Pancreas (tissue), 10 donors: ENCODE measurements at regions of chr20 and their contacts with region 1.

Region 1: DNA sequence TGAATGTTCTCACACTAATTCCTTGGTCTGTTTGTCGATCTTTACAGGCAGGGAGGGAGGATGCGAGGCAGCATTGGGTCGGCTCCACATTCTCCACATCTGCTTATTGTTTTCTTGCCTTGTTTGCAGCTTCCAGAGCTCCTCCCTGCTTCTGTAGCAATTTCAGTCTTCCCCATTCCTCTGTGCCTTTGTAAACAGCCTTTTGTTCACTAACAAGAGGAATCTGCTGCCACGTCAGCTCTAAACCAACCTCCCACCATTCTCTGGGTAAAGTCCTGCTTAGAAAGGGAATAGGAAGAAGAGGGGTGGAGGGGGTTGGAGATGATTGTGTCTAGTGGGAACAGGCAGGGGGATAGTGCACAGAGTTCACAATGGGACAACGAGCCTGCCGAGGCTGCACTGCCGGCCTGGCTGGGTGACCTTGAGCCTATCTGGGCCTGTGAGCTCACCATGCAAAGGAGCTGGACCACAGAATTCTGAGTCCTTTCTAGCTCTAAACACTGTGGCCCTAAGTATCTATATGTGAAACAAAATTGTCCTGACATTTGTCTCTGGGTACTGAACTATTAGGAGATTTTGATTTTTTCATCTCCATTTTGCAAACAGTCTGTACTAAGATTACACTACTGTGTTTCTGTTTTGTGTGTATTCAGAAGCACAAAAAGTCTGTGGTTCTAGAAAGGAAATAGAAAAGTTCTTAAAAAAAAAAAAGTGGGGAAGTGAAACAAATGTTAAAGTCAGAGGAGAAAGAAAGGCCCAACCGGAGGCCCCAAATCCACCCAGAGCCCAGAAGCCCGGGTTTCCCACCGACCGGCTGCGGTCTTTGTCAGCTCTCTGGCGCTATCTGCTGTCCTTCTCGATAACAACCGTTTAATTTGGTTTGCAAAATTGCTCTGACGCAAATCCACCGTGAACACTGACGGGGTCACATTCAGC is 1.4 kb upstream of the PRND start:
- DNase-seq: peak; percentile 45 to 69 (median 62)
- ATAC-seq: peak; percentile 87 to 96 (median 93)
- H3K4me3 ChIP-seq: no peak overlapping the region
- H3K27ac ChIP-seq: peak overlapping the region in 2 of 4 donors; percentile 37 to 39
- H3K4me1 ChIP-seq: no peaks in the 10 kb centered on the region
- H3K27me3 ChIP-seq: peaks cover 0 to 5% (median 0%) of the 10 kb centered on the region in 4 donors
- CTCF ChIP-seq: peak; percentile 17 to 53 (median 46)

Region 2: GRCh38 chr20:4607287-4607713 is 113.0 kb before region 1 on chr20:
- intact Hi-C with region 1: loop called (anchors 5 kb)
- DNase-seq: peak in 3 of 6 donors; percentile 30 to 69 (median 39)
- ATAC-seq: peak; percentile 67 to 94 (median 92)
- H3K4me3 ChIP-seq: no peak overlapping the region
- H3K27ac ChIP-seq: no peak overlapping the region
- H3K4me1 ChIP-seq: no peaks in the 10 kb centered on the region
- H3K27me3 ChIP-seq: no peaks in the 10 kb centered on the region
- CTCF ChIP-seq: peak; percentile 75 to 97 (median 87)

Region 3: DNA sequence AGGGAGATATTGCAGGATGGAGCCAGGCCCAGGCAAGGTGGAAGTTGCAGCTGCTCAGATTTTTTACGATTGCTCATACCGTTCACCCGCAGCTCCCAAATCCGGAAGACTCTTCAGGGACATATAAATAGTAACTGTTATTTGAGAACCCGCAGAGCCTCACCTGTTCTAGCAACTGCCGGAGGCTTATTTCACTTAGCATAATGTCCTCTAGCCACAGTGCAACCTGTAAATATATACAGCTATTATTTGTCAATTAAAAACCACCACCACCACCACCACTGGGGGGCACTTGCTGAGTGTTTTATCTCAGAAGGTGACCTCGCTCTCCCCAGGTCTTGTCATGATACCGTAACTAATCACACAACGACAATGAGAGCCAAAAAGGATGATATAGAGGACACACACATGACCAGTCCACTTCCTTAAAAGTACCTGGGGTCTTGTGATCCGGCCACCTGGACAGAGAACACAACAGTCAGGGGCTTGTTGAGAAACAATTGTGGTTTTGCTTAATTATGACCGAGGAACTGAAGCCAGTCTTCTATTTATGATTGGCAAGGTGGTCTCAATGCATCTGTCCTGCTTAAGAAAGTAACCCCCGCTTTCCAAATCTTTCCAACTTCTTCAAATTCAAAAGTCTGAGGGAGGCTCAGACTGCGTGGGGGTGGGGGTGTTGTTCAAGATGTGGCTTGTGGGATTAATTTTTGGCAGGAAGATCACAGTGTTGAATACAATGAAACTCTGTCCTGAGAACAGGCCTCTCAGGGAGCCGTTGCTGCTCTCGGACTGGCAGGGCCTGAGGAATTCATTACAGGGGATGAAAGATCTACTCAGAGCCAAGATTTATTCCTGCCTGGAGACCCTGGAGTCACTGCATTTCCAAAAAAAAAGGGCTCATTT is 106.3 kb before region 1 on chr20:
- intact Hi-C with region 1: loop called (anchors 5 kb)
- DNase-seq: peak in 2 of 6 donors; percentile 31 to 35
- ATAC-seq: peak in 3 of 4 donors; percentile 59 to 74 (median 67)
- H3K4me3 ChIP-seq: no peak overlapping the region
- H3K27ac ChIP-seq: no peak overlapping the region
- H3K4me1 ChIP-seq: no peaks in the 10 kb centered on the region
- H3K27me3 ChIP-seq: no peaks in the 10 kb centered on the region
- CTCF ChIP-seq: no peak

Region 4: GRCh38 chr20:4766631-4767030 is 46.3 kb after region 1 on chr20:
- intact Hi-C with region 1: no loop called
- DNase-seq: no peak
- ATAC-seq: peak in 2 of 4 donors; percentile 67 to 76
- H3K4me3 ChIP-seq: no peak overlapping the region
- H3K27ac ChIP-seq: no peak overlapping the region
- H3K4me1 ChIP-seq: no peaks in the 10 kb centered on the region
- H3K27me3 ChIP-seq: no peaks in the 10 kb centered on the region
- CTCF ChIP-seq: no peak